ENCODE measurements at regions of chr11 and their contacts with region 1.

Region 1: GRCh38 chr11:33039274-33040032 is at the start of gene TCP11L1:
- DNase-seq: peak; percentile 74 to 90 (median 80)
- H3K4me3 ChIP-seq: peak within 1 kb of the TSS; percentile 62 to 73
- H3K4me3 Mint-ChIP-seq: peak within 1 kb of the TSS; percentile 93 to 95 (median 95)
- H3K27ac ChIP-seq: peak within 1 kb of the TSS; percentile 78
- H3K27ac Mint-ChIP-seq: peak within 1 kb of the TSS; percentile 92 to 98 (median 95)
- H3K4me1 ChIP-seq: peaks cover 11% of the 10 kb centered on the region
- H3K4me1 Mint-ChIP-seq: peaks cover 8 to 19% (median 11%) of the 10 kb centered on the region in 4 donors
- H3K27me3 ChIP-seq: no peaks in the 10 kb centered on the region
- H3K27me3 Mint-ChIP-seq: peaks cover 2 to 7% of the 10 kb centered on the region in 2 donors
- total RNA-seq, gene TCP11L1: 20.2 to 20.9 TPM

Region 2: GRCh38 chr11:32478277-32478731 is 561.1 kb before region 1 on chr11:
- CTCF ChIA-PET with region 1: no interaction called
- POLR2A ChIA-PET with region 1: no interaction called
- intact Hi-C with region 1: no loop called
- DNase-seq: no peak
- H3K4me3 ChIP-seq: no peak overlapping the region
- H3K4me3 Mint-ChIP-seq: no peak overlapping the region
- H3K27ac ChIP-seq: no peak overlapping the region
- H3K27ac Mint-ChIP-seq: no peak overlapping the region
- H3K4me1 ChIP-seq: no peaks in the 10 kb centered on the region
- H3K4me1 Mint-ChIP-seq: no peaks in the 10 kb centered on the region
- H3K27me3 ChIP-seq: no peaks in the 10 kb centered on the region
- H3K27me3 Mint-ChIP-seq: peaks cover 3 to 5% of the 10 kb centered on the region in 2 donors

Region 3: DNA sequence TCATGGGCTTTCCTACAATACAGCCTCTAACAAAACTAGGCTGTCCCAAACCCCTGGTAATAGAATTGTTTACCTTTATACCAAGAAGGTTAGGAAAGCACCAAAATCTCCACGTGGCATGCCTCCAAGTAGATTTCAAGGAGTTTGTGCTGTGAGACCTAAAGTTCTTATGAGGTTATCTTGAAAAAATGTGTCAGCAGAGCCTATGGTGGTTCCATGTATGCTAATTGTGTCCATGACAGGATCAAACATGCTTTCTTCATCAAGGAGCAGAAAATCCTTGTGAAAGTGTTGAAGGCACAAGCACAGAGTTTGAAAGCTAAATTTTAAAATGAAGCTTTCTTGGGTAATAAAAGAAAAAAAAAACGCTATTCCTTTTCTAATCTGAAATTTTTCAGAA is 281.2 kb before region 1 on chr11:
- CTCF ChIA-PET with region 1: no interaction called
- POLR2A ChIA-PET with region 1: no interaction called
- intact Hi-C with region 1: no loop called
- DNase-seq: no peak
- H3K4me3 ChIP-seq: no peak overlapping the region
- H3K4me3 Mint-ChIP-seq: no peak overlapping the region
- H3K27ac ChIP-seq: no peak overlapping the region
- H3K27ac Mint-ChIP-seq: no peak overlapping the region
- H3K4me1 ChIP-seq: no peaks in the 10 kb centered on the region
- H3K4me1 Mint-ChIP-seq: no peaks in the 10 kb centered on the region
- H3K27me3 ChIP-seq: peaks cover 6% of the 10 kb centered on the region
- H3K27me3 Mint-ChIP-seq: peaks cover 0 to 15% of the 10 kb centered on the region in 2 donors

Region 4: DNA sequence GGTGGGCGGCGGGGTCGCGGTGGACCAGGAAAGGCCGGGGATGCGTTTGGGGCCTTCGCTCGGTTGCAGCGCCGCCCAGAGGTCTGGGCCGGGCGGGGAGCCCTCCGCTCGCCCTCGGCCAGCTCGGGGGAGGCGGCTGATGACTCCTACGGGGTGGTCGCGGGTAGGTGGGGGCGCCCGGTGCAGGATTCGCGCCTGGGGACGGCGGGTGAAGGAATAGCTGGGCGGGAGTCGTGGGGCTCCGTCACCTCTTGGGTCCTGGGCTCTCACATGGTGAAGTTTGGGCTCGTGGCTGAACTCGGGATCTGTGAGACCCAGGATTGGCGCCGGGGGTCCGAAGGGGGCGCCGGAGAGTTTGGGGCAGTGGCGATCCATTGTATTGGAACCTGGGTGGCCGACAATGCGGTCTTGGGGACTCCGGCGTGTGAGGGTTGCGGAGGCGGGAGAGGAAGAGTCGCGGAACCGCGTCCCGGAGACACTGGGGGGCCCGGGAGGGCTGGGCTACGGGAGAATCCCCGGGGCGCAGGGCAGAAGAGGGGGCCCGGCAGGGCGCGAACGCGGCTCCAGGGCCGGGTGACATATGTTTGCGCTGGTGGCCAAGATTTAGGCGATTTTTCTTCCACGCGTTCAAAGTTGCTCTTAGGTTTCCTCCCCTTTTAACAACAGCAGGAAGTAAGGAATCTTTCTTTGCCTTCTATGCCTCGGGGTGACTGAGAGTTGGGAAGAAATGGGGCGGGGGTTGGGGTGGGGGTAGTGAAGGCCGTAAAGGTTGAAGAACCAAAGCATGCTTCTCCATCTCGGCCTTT is 145.9 kb before region 1 on chr11:
- CTCF ChIA-PET with region 1: interaction called, 6 read pairs
- POLR2A ChIA-PET with region 1: interaction called, 16 read pairs
- intact Hi-C with region 1: loop called (anchors 2 kb)
- DNase-seq: peak in 3 of 5 donors; percentile 36 to 61 (median 38)
- H3K4me3 ChIP-seq: peak overlapping the region; percentile 57 to 72
- H3K4me3 Mint-ChIP-seq: peak overlapping the region; percentile 87 to 96 (median 94)
- H3K27ac ChIP-seq: peak overlapping the region; percentile 58
- H3K27ac Mint-ChIP-seq: peak overlapping the region; percentile 84 to 94 (median 88)
- H3K4me1 ChIP-seq: peaks cover 17% of the 10 kb centered on the region
- H3K4me1 Mint-ChIP-seq: peaks cover 20 to 36% (median 29%) of the 10 kb centered on the region in 4 donors
- H3K27me3 ChIP-seq: no peaks in the 10 kb centered on the region
- H3K27me3 Mint-ChIP-seq: no peaks in the 10 kb centered on the region

Region 5: GRCh38 chr11:32960553-32961164 is 78.8 kb before region 1 on chr11:
- CTCF ChIA-PET with region 1: interaction called, 10 read pairs
- POLR2A ChIA-PET with region 1: no interaction called
- intact Hi-C with region 1: loop called (anchors 1 kb)
- DNase-seq: peak in 4 of 5 donors; percentile 40 to 57 (median 54)
- H3K4me3 ChIP-seq: no peak overlapping the region
- H3K4me3 Mint-ChIP-seq: no peak overlapping the region
- H3K27ac ChIP-seq: no peak overlapping the region
- H3K27ac Mint-ChIP-seq: no peak overlapping the region
- H3K4me1 ChIP-seq: no peaks in the 10 kb centered on the region
- H3K4me1 Mint-ChIP-seq: peaks cover 0 to under 1% (median 0%) of the 10 kb centered on the region in 4 donors
- H3K27me3 ChIP-seq: no peaks in the 10 kb centered on the region
- H3K27me3 Mint-ChIP-seq: no peaks in the 10 kb centered on the region

Region 6: DNA sequence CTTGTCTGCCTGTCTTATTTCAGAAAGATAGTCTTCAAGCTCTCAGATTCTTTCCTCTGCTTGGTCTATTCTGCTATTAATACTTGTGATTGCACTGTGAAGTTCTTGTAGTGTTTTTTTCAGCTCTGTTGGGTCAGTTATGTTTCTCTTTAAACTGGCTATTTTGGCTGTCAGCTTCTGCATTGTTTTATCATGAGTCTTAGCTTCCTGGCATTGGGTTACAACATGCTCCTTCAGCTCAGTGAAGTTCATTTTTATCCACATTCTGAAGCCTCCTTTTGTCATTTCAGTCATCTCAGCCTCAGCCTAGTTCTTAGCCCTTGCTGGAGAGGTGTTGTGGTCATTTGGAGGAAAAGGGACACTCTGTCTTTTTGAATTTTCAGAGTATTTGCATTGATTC is 39.3 kb before region 1 on chr11:
- CTCF ChIA-PET with region 1: interaction called, 3 read pairs
- POLR2A ChIA-PET with region 1: no interaction called
- intact Hi-C with region 1: loop called (anchors 5 kb)
- DNase-seq: no peak
- H3K4me3 ChIP-seq: no peak overlapping the region
- H3K4me3 Mint-ChIP-seq: no peak overlapping the region
- H3K27ac ChIP-seq: no peak overlapping the region
- H3K27ac Mint-ChIP-seq: no peak overlapping the region
- H3K4me1 ChIP-seq: peaks cover 8% of the 10 kb centered on the region
- H3K4me1 Mint-ChIP-seq: peaks cover 6 to 13% (median 8%) of the 10 kb centered on the region in 4 donors
- H3K27me3 ChIP-seq: no peaks in the 10 kb centered on the region
- H3K27me3 Mint-ChIP-seq: peaks cover 7 to 10% of the 10 kb centered on the region in 2 donors

Region 7: GRCh38 chr11:33015621-33016551 is 23.6 kb before region 1 on chr11 and contains the start of gene DEPDC7:
- CTCF ChIA-PET with region 1: interaction called, 6 read pairs
- POLR2A ChIA-PET with region 1: interaction called, 43 read pairs
- intact Hi-C with region 1: loop called (anchors 1 kb)
- DNase-seq: peak; percentile 66 to 73 (median 69)
- H3K4me3 ChIP-seq: peak within 1 kb of the TSS; percentile 43 to 49
- H3K4me3 Mint-ChIP-seq: peak within 1 kb of the TSS; percentile 82 to 88 (median 86)
- H3K27ac ChIP-seq: no peak within 1 kb of the TSS
- H3K27ac Mint-ChIP-seq: peak within 1 kb of the TSS in 3 of 7 donors; percentile 8 to 66 (median 25)
- H3K4me1 ChIP-seq: peaks cover 25% of the 10 kb centered on the region
- H3K4me1 Mint-ChIP-seq: peaks cover 14 to 42% (median 25%) of the 10 kb centered on the region in 4 donors
- H3K27me3 ChIP-seq: peaks cover 3% of the 10 kb centered on the region
- H3K27me3 Mint-ChIP-seq: peaks cover 9 to 19% of the 10 kb centered on the region in 2 donors
- total RNA-seq, gene DEPDC7: 1.4 to 1.9 TPM

Region 8: GRCh38 chr11:33021937-33022336 is 17.5 kb before region 1 on chr11:
- CTCF ChIA-PET with region 1: interaction called, 6 read pairs
- POLR2A ChIA-PET with region 1: interaction called, 43 read pairs
- intact Hi-C with region 1: no loop called
- DNase-seq: no peak
- H3K4me3 ChIP-seq: no peak overlapping the region
- H3K4me3 Mint-ChIP-seq: no peak overlapping the region
- H3K27ac ChIP-seq: no peak overlapping the region
- H3K27ac Mint-ChIP-seq: no peak overlapping the region
- H3K4me1 ChIP-seq: peaks cover 7% of the 10 kb centered on the region
- H3K4me1 Mint-ChIP-seq: peaks cover 2 to 17% (median 7%) of the 10 kb centered on the region in 4 donors
- H3K27me3 ChIP-seq: no peaks in the 10 kb centered on the region
- H3K27me3 Mint-ChIP-seq: peaks cover 8 to 15% of the 10 kb centered on the region in 2 donors

Region 9: GRCh38 chr11:33362051-33362910 is 322.8 kb after region 1 on chr11:
- CTCF ChIA-PET with region 1: no interaction called
- POLR2A ChIA-PET with region 1: no interaction called
- intact Hi-C with region 1: no loop called
- DNase-seq: peak in 4 of 5 donors; percentile 32 to 40 (median 36)
- H3K4me3 ChIP-seq: no peak overlapping the region
- H3K4me3 Mint-ChIP-seq: peak overlapping the region in 2 of 8 donors; percentile 26 to 50
- H3K27ac ChIP-seq: no peak overlapping the region
- H3K27ac Mint-ChIP-seq: no peak overlapping the region
- H3K4me1 ChIP-seq: peaks cover 6% of the 10 kb centered on the region
- H3K4me1 Mint-ChIP-seq: peaks cover 0 to 2% (median under 1%) of the 10 kb centered on the region in 4 donors
- H3K27me3 ChIP-seq: no peaks in the 10 kb centered on the region
- H3K27me3 Mint-ChIP-seq: peaks cover 2 to 3% of the 10 kb centered on the region in 2 donors

Measured in CD4-positive, alpha-beta memory T cell (primary cell).